ENCODE measurements at regions of chr17 and their contacts with region 1.

Region 1: GRCh38 chr17:57861000-57861789 is 11.4 kb upstream of the MRPS23 start:
- DNase-seq: peak in 1 of 2 experiments; percentile 64
- H3K4me3 ChIP-seq: peak overlapping the region; percentile 30 to 66 (median 46)
- H3K27ac ChIP-seq: no peak overlapping the region
- H3K4me1 ChIP-seq: peaks cover 0 to 16% (median 14%) of the 10 kb centered on the region in 4 experiments; a peak in 5 of 7 replicates
- H3K27me3 ChIP-seq: peaks cover 0 to 30% (median 26%) of the 10 kb centered on the region in 4 experiments; a peak in 5 of 7 replicates
- CTCF ChIP-seq: no peak
- EP300 ChIP-seq: no peak
- POLR2A ChIP-seq: no peak
- RAD21 ChIP-seq: no peak

Region 2: DNA sequence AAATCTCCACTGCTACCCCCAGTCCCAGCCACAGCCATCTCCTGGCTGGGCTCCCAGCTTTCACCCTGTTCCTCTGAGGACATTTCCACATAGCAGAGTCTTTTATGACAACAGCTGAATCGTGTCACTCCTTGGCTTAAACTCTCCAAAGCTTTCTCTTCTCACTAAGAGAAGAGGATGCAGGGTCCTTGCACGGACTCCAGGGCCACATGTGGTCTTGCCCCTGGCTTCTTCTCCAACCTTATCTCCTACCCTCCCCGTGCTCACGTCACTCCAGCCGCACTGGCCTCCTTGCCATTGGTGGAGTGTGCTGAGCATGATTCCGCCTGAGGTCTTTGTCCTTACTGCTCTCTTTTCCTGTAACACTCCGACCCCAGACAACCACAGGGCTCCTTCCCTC is 76.2 kb before region 1 on chr17:
- CTCF ChIA-PET with region 1: no interaction called
- POLR2A ChIA-PET with region 1: no interaction called
- DNase-seq: no peak
- H3K4me3 ChIP-seq: no peak overlapping the region
- H3K27ac ChIP-seq: no peak overlapping the region
- H3K4me1 ChIP-seq: peaks cover 5 to 12% (median 8%) of the 10 kb centered on the region in 4 experiments; a peak in 6 of 7 replicates
- H3K27me3 ChIP-seq: peaks cover 0 to 13% (median 7%) of the 10 kb centered on the region in 4 experiments; a peak in 6 of 7 replicates
- CTCF ChIP-seq: no peak
- EP300 ChIP-seq: no peak
- POLR2A ChIP-seq: no peak
- RAD21 ChIP-seq: no peak

Region 3: GRCh38 chr17:57818066-57818465 is 43.1 kb before region 1 on chr17:
- CTCF ChIA-PET with region 1: no interaction called
- POLR2A ChIA-PET with region 1: no interaction called
- DNase-seq: no peak
- H3K4me3 ChIP-seq: no peak overlapping the region
- H3K27ac ChIP-seq: no peak overlapping the region
- H3K4me1 ChIP-seq: no peaks in the 10 kb centered on the region
- H3K27me3 ChIP-seq: no peaks in the 10 kb centered on the region
- CTCF ChIP-seq: no peak
- EP300 ChIP-seq: no peak
- POLR2A ChIP-seq: no peak
- RAD21 ChIP-seq: no peak

Region 4: GRCh38 chr17:57833179-57833939 is 27.8 kb before region 1 on chr17:
- CTCF ChIA-PET with region 1: interaction called, 31 read pairs
- POLR2A ChIA-PET with region 1: interaction called, 3 read pairs
- DNase-seq: peak; percentile 13 to 74
- H3K4me3 ChIP-seq: peak overlapping the region in 3 of 4 experiments; percentile 31 to 52 (median 42); a peak in 6 of 8 replicates
- H3K27ac ChIP-seq: no peak overlapping the region
- H3K4me1 ChIP-seq: peaks cover 5 to 14% (median 7%) of the 10 kb centered on the region in 4 experiments
- H3K27me3 ChIP-seq: no peaks in the 10 kb centered on the region
- CTCF ChIP-seq: peak; percentile 78 to 96 (median 87)
- EP300 ChIP-seq: no peak
- POLR2A ChIP-seq: no peak
- RAD21 ChIP-seq: peak; percentile 77 to 83

Region 5: GRCh38 chr17:57875309-57876115 is 14.3 kb after region 1 on chr17:
- CTCF ChIA-PET with region 1: interaction called, 221 read pairs
- POLR2A ChIA-PET with region 1: interaction called, 50 read pairs
- DNase-seq: peak; percentile 71 to 72
- H3K4me3 ChIP-seq: peak overlapping the region in 2 of 4 experiments; percentile 11 to 32; a peak in 5 of 8 replicates
- H3K27ac ChIP-seq: peak overlapping the region; percentile 32; the same call in 1 of the 2 replicates
- H3K4me1 ChIP-seq: peaks cover 21 to 50% (median 37%) of the 10 kb centered on the region in 4 experiments
- H3K27me3 ChIP-seq: peaks cover 0 to 14% (median 6%) of the 10 kb centered on the region in 4 experiments; a peak in 4 of 7 replicates
- CTCF ChIP-seq: 0 out of 4 replicates have a peak, but pooled peaks of 1 of the 3 experiments have one; percentile 6
- EP300 ChIP-seq: no peak
- POLR2A ChIP-seq: no peak
- RAD21 ChIP-seq: peak in 1 of 2 experiments; percentile 20; a peak in 2 of 4 replicates

Region 6: GRCh38 chr17:57902800-57903759 is 41.9 kb after region 1 on chr17:
- CTCF ChIA-PET with region 1: interaction called, 41 read pairs
- POLR2A ChIA-PET with region 1: interaction called, 4 read pairs
- DNase-seq: no peak
- H3K4me3 ChIP-seq: no peak overlapping the region
- H3K27ac ChIP-seq: no peak overlapping the region
- H3K4me1 ChIP-seq: peaks cover 5 to 36% (median 26%) of the 10 kb centered on the region in 4 experiments
- H3K27me3 ChIP-seq: no peaks in the 10 kb centered on the region
- CTCF ChIP-seq: no peak
- EP300 ChIP-seq: no peak
- POLR2A ChIP-seq: no peak
- RAD21 ChIP-seq: no peak

Region 7: GRCh38 chr17:57939797-57940196 is 78.6 kb after region 1 on chr17:
- CTCF ChIA-PET with region 1: interaction called, 12 read pairs
- POLR2A ChIA-PET with region 1: no interaction called
- DNase-seq: no peak
- H3K4me3 ChIP-seq: no peak overlapping the region
- H3K27ac ChIP-seq: no peak overlapping the region
- H3K4me1 ChIP-seq: peaks cover 6 to 15% (median 13%) of the 10 kb centered on the region in 4 experiments
- H3K27me3 ChIP-seq: no peaks in the 10 kb centered on the region
- CTCF ChIP-seq: no peak
- EP300 ChIP-seq: no peak
- POLR2A ChIP-seq: no peak
- RAD21 ChIP-seq: no peak

Region 8: DNA sequence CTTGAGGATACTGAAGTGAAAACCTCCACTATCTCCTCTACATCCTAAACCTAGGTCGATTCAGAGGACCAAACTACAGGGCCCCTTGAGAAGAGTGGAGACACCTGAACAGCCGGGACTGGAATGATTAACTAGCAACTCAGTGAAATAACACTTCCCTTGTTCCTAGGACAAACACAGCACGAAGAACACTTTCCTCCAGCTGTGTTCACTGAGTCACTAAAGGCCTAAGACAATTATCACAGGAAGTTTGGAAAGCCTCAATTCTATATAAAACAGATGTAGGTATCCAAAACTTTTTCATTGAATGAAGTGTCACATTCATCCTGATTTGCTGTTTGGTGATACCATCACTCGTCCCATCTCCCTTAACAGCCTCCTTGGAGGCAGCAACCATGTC is 109.5 kb after region 1 on chr17:
- CTCF ChIA-PET with region 1: interaction called, 96 read pairs
- POLR2A ChIA-PET with region 1: interaction called, 3 read pairs
- DNase-seq: no peak
- H3K4me3 ChIP-seq: no peak overlapping the region
- H3K27ac ChIP-seq: no peak overlapping the region
- H3K4me1 ChIP-seq: peaks cover 0 to 3% (median 0%) of the 10 kb centered on the region in 4 experiments; a peak in 3 of 7 replicates
- H3K27me3 ChIP-seq: no peaks in the 10 kb centered on the region
- CTCF ChIP-seq: no peak
- EP300 ChIP-seq: no peak
- POLR2A ChIP-seq: no peak
- RAD21 ChIP-seq: no peak

Region 9: GRCh38 chr17:58112970-58113631 is 251.9 kb after region 1 on chr17:
- CTCF ChIA-PET with region 1: interaction called, 73 read pairs
- POLR2A ChIA-PET with region 1: interaction called, 3 read pairs
- DNase-seq: peak in 1 of 2 experiments; percentile 96
- H3K4me3 ChIP-seq: no peak overlapping the region
- H3K27ac ChIP-seq: no peak overlapping the region
- H3K4me1 ChIP-seq: no peaks in the 10 kb centered on the region
- H3K27me3 ChIP-seq: no peaks in the 10 kb centered on the region
- CTCF ChIP-seq: peak; percentile 86 to 99 (median 93)
- EP300 ChIP-seq: no peak
- POLR2A ChIP-seq: no peak
- RAD21 ChIP-seq: peak; percentile 98 to 99